Dorsolateral prefrontal cortex (tissue), 120 donors: ENCODE measurements at regions of chr6 and their contacts with region 1.

Region 1: GRCh38 chr6:36123257-36124139 is 6.8 kb upstream of the MAPK13 start:
- DNase-seq: peak in 9 of 10 donors; percentile 44 to 86 (median 74)
- H3K4me3 ChIP-seq: peak overlapping the region in 1 of 59 donors; percentile 9
- H3K27ac ChIP-seq: peak overlapping the region in 23 of 59 donors; percentile 2 to 69 (median 39)
- H3K27me3 ChIP-seq: no peaks in the 10 kb centered on the region
- CTCF ChIP-seq: peak in 54 of 56 donors; percentile 35 to 76 (median 62)

Region 2: DNA sequence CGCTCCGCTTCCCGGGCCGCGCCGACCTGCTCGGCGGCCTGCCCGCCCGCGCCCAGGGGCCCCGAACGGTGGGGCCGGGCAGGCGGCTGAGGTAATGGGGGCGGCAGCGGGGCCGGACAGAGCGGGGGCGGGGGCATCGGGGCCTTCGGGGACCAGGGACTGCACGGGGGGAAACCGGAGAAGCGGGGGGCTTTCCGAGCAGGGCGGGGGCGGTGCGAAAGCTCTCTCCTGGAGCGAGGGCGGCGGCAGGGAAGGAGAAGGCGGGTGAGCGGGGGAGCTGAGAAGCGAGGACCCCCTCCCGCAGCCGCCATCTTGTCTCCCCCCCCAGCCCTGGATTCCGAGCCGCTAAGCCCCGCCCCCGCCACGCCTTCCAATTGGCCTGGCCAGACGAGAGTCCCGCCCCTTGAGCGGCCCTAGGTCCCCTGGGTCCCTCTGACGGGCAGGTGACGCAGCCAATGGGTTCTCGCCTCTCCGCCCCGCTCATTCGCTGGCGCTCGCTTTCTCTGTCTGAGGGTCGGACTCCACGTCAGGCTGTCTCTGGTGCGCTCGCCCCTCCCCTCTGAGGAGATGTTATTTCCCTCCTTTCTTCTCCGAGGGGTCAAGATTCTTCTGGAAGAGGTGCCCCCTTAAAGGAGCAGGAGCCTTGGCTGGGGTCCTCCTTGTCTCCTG is 73.5 kb after region 1 on chr6:
- intact Hi-C with region 1: loop called (anchors 2 to 5 kb)
- DNase-seq: peak; percentile 99 to 100 (median 99)
- H3K4me3 ChIP-seq: peak overlapping the region; percentile 45 to 81 (median 69)
- H3K27ac ChIP-seq: peak overlapping the region; percentile 71 to 98 (median 95)
- H3K27me3 ChIP-seq: no peaks in the 10 kb centered on the region
- CTCF ChIP-seq: peak in 3 of 56 donors; percentile 10 to 14 (median 14)

Region 3: DNA sequence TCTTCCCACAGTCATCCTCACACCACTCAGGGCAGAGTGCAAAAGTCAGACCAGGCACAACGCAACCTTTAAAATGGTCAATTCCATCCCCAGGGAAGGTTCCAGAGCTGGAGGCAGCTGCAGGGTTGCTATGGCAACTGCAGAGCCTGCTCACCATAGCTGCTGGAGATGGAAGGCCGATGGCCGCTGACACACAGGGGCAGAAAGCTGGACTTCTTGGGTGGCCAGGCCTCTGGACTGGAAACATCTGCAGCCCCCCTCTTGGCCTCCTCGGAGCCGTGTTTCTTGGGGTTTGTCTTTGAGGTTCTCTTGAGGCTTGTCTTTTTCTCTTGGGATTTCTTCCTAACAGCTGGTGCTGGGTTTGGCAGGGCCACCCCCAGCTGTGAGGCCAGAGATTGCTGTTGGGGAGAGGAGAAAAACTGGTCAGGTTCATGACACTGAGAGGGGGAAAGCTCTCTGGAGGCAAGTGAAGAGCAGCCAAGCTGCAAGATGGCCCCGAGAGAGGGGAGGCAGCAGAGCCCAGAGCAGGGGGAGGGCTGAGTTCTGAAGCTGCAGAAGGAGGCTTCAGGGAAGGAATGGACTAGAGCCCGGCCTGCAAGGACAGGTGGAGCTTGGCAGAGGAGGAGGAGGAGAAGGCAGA is 203.0 kb after region 1 on chr6:
- intact Hi-C with region 1: no loop called
- DNase-seq: peak in 7 of 10 donors; percentile 27 to 67 (median 47)
- H3K4me3 ChIP-seq: no peak overlapping the region
- H3K27ac ChIP-seq: peak overlapping the region in 56 of 59 donors; percentile 2 to 94 (median 59)
- H3K27me3 ChIP-seq: no peaks in the 10 kb centered on the region
- CTCF ChIP-seq: no peak

Region 4: GRCh38 chr6:36350681-36351571 is 227.4 kb after region 1 on chr6:
- intact Hi-C with region 1: loop called in 1 of 2 experiments (anchors 10 kb)
- DNase-seq: no peak
- H3K4me3 ChIP-seq: no peak overlapping the region
- H3K27ac ChIP-seq: peak overlapping the region in 9 of 59 donors; percentile 7 to 55 (median 25)
- H3K27me3 ChIP-seq: no peaks in the 10 kb centered on the region
- CTCF ChIP-seq: no peak

Region 5: DNA sequence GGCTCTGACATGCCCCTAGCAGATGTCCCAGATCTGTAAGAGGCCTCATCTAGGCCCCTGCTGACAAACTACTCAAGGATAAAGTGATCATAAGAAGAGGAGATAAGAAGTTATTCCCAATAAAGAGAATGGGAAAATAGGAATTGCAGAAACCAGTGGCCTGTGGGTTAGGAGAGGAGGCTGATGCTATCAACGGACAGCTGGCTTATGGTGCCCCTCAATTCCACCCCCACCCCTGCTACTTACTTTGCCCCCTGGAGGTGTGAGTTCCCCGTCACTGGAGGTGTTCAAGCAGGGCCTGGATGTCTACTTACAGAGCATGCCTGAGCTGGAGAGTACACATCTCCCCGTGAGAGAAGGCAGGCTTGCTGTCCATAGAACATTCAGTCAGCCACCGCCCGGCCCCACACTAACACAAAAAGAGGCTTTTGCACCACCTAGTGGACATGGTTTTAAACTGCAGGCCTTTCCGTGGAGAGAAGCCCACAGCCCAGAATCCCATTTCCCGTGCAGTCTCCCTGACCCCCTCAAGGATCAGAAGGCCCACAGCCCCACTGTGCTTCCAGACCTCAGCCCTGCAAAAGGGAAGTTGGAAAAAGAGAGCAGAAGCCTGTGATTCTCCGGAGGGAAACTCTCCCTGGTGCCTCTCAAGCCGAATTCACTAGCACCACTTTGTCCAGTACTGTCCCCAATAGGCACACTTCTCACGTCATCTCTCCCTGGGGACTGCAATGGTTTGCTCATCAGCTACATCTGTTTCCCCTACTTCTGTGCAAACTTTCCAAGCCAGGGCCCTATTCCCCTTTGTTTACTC is 236.9 kb after region 1 on chr6:
- intact Hi-C with region 1: loop called (anchors 10 kb)
- DNase-seq: peak; percentile 67 to 91 (median 83)
- H3K4me3 ChIP-seq: peak overlapping the region in 10 of 59 donors; percentile 0 to 33 (median 12)
- H3K27ac ChIP-seq: peak overlapping the region; percentile 8 to 98 (median 78)
- H3K27me3 ChIP-seq: no peaks in the 10 kb centered on the region
- CTCF ChIP-seq: peak; percentile 61 to 97 (median 89)